ENCODE measurements at regions of chr15 and their contacts with region 1.

Region 1: GRCh38 chr15:81091889-81092558 is 42.0 kb upstream of the CFAP161 start:
- DNase-seq: no peak
- ATAC-seq: peak; percentile 69
- H3K4me3 ChIP-seq: no peak overlapping the region
- H3K27ac ChIP-seq: peak overlapping the region; percentile 39 to 50
- H3K4me1 ChIP-seq: peaks cover 4 to 13% of the 10 kb centered on the region in 2 donors
- H3K27me3 ChIP-seq: peaks cover 0 to 8% of the 10 kb centered on the region in 2 donors
- CTCF ChIP-seq: no peak

Region 2: DNA sequence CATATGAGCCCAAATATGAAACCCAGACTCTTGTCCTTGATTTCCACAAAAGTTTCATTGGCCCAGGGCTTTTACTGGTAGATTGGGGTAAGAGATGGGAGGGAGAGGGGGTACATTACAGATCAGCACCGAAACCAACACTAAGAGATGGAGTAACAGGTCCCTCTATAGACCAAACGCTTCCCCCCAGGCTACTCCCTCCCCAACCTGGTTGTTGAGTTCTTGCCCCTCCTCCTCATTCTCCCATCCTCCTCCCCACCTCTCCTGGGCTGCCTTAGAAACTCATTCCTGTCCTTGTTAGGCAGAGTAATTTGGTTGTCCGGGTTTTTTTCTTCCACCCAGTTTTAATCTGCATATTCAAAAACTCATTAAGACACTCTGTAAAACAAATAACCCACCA is 176.6 kb before region 1 on chr15:
- intact Hi-C with region 1: no loop called
- DNase-seq: no peak
- ATAC-seq: no peak
- H3K4me3 ChIP-seq: no peak overlapping the region
- H3K27ac ChIP-seq: no peak overlapping the region
- H3K4me1 ChIP-seq: no peaks in the 10 kb centered on the region
- H3K27me3 ChIP-seq: no peaks in the 10 kb centered on the region
- CTCF ChIP-seq: no peak

Region 3: GRCh38 chr15:81000624-81001151 is 91.3 kb before region 1 on chr15 and contains the start of gene TLNRD1:
- intact Hi-C with region 1: loop called in 1 of 2 experiments (anchors 10 kb)
- DNase-seq: peak; percentile 90 to 97 (median 96)
- ATAC-seq: peak; percentile 89
- H3K4me3 ChIP-seq: peak within 1 kb of the TSS; percentile 82 to 84
- H3K27ac ChIP-seq: peak within 1 kb of the TSS; percentile 98 to 99
- H3K4me1 ChIP-seq: peaks cover 12 to 55% of the 10 kb centered on the region in 2 donors
- H3K27me3 ChIP-seq: no peaks in the 10 kb centered on the region
- CTCF ChIP-seq: no peak
- polyA plus RNA-seq, gene TLNRD1: 10.1 to 18.5 (median 15.7) TPM

Measured in left lung (tissue), 14 donors.